ENCODE measurements at regions of chr22 and their contacts with region 1.

Region 1: DNA sequence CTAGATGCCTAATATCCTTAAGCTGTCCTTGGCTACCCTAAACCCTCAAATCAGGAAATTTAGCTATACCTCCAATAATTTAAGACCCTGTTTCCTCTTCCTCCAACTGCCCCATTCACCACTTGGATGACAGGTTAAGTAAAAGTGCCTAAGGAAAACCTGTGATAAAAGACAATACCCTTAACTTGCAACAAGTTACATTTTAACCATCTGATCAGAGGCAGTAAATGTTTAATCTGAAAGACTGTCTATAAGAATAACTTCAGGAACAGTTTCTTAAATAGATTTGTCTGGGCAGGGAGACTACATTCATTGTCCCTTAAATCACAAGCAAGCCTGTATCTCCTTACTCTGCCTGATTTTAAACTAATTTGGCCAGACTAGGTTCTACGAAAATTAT is 129.1 kb downstream of the APOL5 start:
- DNase-seq: no peak
- ATAC-seq: no peak
- H3K4me3 ChIP-seq: no peak overlapping the region
- H3K27ac ChIP-seq: no peak overlapping the region
- H3K4me1 ChIP-seq: peaks cover 9% of the 10 kb centered on the region
- H3K27me3 ChIP-seq: no peaks in the 10 kb centered on the region
- CTCF ChIP-seq: no peak

Region 2: DNA sequence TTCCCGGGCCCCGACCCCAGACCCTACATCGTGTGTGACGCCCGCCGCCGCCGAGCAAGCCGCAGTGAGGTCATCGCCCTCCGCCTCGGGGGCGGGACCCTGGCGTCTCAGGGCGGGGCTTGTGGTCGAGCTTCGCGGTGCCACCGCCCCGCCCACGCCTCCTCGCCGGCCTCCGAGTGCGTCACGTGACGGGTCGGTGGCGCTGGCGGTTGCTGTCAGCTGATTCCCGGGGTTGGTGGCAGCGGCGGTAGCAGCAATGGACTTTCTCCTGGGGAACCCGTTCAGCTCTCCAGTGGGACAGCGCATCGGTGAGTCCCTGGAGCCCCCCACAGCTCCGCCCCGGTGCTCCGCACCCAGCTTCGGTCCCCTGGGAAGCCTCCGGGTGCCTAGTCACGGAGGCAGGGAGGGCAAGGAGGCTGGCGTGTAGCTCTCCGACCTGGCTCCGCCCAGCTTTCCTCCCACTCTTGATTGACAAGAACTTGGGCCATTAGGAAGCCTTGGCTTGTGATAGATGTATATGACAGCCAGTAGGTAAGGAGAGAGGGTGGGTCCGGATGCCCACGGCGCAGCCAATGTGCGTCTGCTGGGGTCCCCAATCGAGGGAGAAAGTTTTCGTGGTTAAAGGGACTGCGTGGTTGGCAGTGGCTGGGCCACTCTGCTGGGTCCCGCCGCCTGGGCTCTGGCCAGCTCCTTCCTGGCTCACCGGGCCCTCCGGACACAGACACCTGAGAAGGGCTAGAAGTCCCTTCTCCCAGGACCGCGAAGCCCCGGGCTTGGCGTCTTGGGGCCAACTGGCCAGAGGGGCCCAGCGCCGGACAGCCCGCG is 546.9 kb before region 1 on chr22 and contains the start of gene TOM1:
- CTCF ChIA-PET with region 1: no interaction called
- POLR2A ChIA-PET with region 1: interaction called, 10 read pairs
- in situ Hi-C with region 1: no loop called
- intact Hi-C with region 1: no loop called
- DNase-seq: peak; percentile 80
- ATAC-seq: peak; percentile 96
- H3K4me3 ChIP-seq: peak within 1 kb of the TSS; percentile 79 to 84
- H3K27ac ChIP-seq: peak within 1 kb of the TSS; percentile 83
- H3K4me1 ChIP-seq: peaks cover 9% of the 10 kb centered on the region
- H3K27me3 ChIP-seq: no peaks in the 10 kb centered on the region
- CTCF ChIP-seq: no peak
- total RNA-seq, gene TOM1: 32.7 TPM

Region 3: DNA sequence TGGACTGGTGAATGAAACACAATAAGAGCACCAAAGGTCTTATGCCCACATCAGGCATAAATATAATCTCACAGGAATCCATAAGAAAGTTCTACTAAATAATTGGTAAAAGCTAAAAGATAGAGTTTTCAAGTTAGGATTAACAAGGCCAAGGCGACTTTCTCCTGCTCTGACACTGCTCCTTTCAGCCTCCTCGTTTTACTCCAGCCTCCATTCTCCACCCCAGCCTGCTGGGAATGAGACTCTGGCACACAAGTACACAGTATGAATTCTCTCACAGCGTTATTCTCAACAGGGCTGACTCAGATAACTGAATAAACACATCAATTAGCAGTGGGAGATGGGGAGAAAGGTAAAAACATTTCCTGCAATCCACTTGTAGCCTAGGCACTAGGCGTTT is 34.2 kb before region 1 on chr22:
- CTCF ChIA-PET with region 1: interaction called, 16 read pairs
- POLR2A ChIA-PET with region 1: no interaction called
- in situ Hi-C with region 1: no loop called
- intact Hi-C with region 1: no loop called
- DNase-seq: no peak
- ATAC-seq: no peak
- H3K4me3 ChIP-seq: no peak overlapping the region
- H3K27ac ChIP-seq: no peak overlapping the region
- H3K4me1 ChIP-seq: no peaks in the 10 kb centered on the region
- H3K27me3 ChIP-seq: no peaks in the 10 kb centered on the region
- CTCF ChIP-seq: no peak